Adrenal gland (tissue), 19 donors: ENCODE measurements at regions of chr3 and their contacts with region 1.

Region 1: GRCh38 chr3:9681723-9682081 is 21.9 kb upstream of the CPNE9 start:
- DNase-seq: peak; percentile 50 to 86 (median 82)
- H3K4me3 ChIP-seq: no peak overlapping the region
- H3K27ac ChIP-seq: peak overlapping the region in 3 of 5 donors; percentile 8 to 62 (median 43)
- H3K4me1 ChIP-seq: peaks cover 15 to 35% of the 10 kb centered on the region in 2 donors
- H3K27me3 ChIP-seq: no peaks in the 10 kb centered on the region
- CTCF ChIP-seq: no peak
- POLR2A ChIP-seq: peak in 1 of 2 donors; percentile 25

Region 2: DNA sequence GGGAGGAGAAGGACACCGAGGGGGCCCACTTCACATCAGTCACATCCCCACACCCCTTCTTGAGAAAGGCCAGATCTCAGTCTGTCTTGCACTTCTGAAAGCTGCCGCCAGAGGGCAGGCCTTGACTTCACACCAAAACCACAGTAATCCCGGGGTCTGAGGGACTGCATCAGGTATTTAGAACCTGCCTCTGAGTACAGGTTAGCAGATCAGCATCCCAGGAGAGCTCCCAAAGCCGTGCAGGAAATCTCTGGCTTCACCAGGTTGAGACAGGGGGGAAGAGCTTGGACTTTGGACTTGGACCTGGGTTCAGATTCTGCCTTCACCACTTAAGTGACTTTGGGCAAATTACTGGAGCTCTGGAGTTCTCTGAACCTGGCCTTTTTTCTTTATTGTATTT is 178.4 kb before region 1 on chr3:
- intact Hi-C with region 1: loop called in 1 of 2 experiments (anchors 10 kb)
- DNase-seq: peak; percentile 33 to 90 (median 75)
- H3K4me3 ChIP-seq: no peak overlapping the region
- H3K27ac ChIP-seq: no peak overlapping the region
- H3K4me1 ChIP-seq: peaks cover 0 to 10% of the 10 kb centered on the region in 2 donors
- H3K27me3 ChIP-seq: no peaks in the 10 kb centered on the region
- CTCF ChIP-seq: peak; percentile 67 to 87 (median 82)
- POLR2A ChIP-seq: no peak

Region 3: GRCh38 chr3:9769426-9770275 is 87.9 kb after region 1 on chr3 and contains the start of gene CAMK1:
- intact Hi-C with region 1: no loop called
- DNase-seq: peak; percentile 84 to 90 (median 88)
- H3K4me3 ChIP-seq: peak within 1 kb of the TSS in 3 of 4 donors; percentile 36 to 92 (median 73)
- H3K27ac ChIP-seq: peak within 1 kb of the TSS; percentile 58 to 92 (median 77)
- H3K4me1 ChIP-seq: peaks cover 37 to 54% of the 10 kb centered on the region in 2 donors
- H3K27me3 ChIP-seq: no peaks in the 10 kb centered on the region
- CTCF ChIP-seq: no peak
- POLR2A ChIP-seq: peak; percentile 80 to 94
- total RNA-seq, gene CAMK1: 12.7 to 261 (median 172) TPM